ENCODE measurements at regions of chr11 and their contacts with region 1.

Region 1: DNA sequence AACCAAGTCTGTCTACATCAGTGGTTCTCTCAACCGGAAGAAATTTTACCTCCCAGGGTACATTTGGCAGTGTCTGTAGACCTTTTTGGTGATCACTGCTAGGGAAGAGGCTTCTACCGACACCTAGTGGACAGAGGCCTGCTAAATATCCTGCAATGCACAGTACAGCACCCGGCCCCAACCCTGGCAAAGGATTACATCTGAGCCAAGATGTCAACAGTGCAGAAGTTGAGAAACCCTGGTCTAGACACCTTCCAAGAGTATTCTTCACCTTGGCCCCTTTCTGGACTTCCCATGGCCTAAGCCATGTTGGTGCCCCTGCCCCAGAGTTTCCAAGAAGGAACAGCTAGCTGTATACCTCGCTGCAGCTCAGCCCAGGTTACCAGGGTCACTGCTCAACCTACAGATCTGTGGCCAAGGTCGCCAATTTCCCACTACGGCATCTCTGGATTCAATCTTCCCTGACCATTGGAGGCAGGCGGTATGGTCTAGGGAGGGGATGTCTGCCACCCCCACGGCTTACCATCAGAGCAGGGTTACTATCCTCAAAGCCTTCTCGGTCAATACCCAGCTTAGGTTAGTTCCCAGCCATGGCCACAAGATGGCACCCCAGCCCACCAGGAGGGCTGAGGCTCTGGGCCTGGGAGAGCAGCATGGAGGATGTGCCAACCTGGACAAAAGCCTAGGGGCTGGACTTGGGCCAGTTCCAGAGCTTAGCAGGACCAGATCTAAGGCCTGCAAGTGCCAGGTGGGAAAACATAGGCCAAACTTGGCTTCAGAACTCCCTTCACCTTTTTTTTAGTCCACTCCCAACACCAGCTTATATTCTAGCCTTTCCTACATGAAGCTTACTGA is 3.7 kb upstream of the KCNC1 start:
- DNase-seq: peak; percentile 66
- ATAC-seq: peak; percentile 77
- H3K4me3 ChIP-seq: no peak overlapping the region
- H3K27ac ChIP-seq: no peak overlapping the region
- H3K4me1 ChIP-seq: no peaks in the 10 kb centered on the region
- H3K27me3 ChIP-seq: peaks cover 32% of the 10 kb centered on the region
- CTCF ChIP-seq: peak; percentile 96
- POLR2A ChIP-seq: peak; percentile 46; the same call in 1 of the 2 replicates
- RAD21 ChIP-seq: peak; percentile 98

Region 2: GRCh38 chr11:16986434-16987215 is 744.2 kb before region 1 on chr11:
- CTCF ChIA-PET with region 1: no interaction called
- POLR2A ChIA-PET with region 1: no interaction called
- dilution Hi-C with region 1: no loop called
- in situ Hi-C with region 1: no loop called
- intact Hi-C with region 1: no loop called
- DNase-seq: no peak
- ATAC-seq: no peak
- H3K4me3 ChIP-seq: no peak overlapping the region
- H3K27ac ChIP-seq: no peak overlapping the region
- H3K4me1 ChIP-seq: no peaks in the 10 kb centered on the region
- H3K27me3 ChIP-seq: no peaks in the 10 kb centered on the region; the same call in none of the 2 replicates
- CTCF ChIP-seq: no peak
- POLR2A ChIP-seq: no peak
- RAD21 ChIP-seq: no peak

Region 3: DNA sequence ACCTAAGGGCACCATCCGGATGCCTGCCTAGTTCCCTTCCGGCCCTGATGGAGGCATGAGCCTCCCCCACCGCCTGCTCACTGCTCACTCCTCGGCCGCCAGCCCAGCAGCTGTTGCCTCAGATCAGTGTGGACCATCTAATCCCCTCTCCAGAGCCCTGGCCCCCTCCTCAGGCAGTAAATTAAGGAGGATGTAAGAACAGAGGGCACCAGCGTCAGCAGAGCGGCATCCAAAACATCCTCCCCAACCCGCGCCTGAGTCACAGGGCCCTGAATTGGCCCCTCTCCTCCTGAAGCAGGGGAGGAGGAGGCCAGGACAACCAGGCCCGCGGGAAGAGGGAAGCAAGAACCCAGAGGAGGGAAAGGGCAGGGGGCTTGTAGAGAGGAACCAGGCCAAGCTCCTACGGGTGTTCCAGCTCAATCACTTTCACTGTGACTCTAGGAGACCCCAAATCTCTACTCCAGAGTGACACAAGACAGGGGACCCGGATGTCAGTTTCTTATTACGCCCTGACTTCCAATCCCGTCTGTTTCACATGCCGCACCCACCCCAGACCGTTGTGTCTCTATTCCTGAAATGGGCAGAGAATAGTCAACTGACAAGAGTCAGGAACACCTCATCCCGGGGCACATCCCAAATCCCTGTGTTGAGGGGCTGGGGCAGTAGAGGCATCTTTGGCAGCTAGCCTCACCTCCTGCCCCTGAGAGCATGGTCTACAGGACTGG is 42.7 kb before region 1 on chr11:
- CTCF ChIA-PET with region 1: no interaction called
- POLR2A ChIA-PET with region 1: no interaction called
- dilution Hi-C with region 1: no loop called
- in situ Hi-C with region 1: no loop called
- intact Hi-C with region 1: no loop called
- DNase-seq: no peak
- ATAC-seq: no peak
- H3K4me3 ChIP-seq: no peak overlapping the region
- H3K27ac ChIP-seq: no peak overlapping the region
- H3K4me1 ChIP-seq: no peaks in the 10 kb centered on the region
- H3K27me3 ChIP-seq: peaks cover 13% of the 10 kb centered on the region; the same call in 1 of the 2 replicates
- CTCF ChIP-seq: no peak
- POLR2A ChIP-seq: no peak
- RAD21 ChIP-seq: no peak

Region 4: DNA sequence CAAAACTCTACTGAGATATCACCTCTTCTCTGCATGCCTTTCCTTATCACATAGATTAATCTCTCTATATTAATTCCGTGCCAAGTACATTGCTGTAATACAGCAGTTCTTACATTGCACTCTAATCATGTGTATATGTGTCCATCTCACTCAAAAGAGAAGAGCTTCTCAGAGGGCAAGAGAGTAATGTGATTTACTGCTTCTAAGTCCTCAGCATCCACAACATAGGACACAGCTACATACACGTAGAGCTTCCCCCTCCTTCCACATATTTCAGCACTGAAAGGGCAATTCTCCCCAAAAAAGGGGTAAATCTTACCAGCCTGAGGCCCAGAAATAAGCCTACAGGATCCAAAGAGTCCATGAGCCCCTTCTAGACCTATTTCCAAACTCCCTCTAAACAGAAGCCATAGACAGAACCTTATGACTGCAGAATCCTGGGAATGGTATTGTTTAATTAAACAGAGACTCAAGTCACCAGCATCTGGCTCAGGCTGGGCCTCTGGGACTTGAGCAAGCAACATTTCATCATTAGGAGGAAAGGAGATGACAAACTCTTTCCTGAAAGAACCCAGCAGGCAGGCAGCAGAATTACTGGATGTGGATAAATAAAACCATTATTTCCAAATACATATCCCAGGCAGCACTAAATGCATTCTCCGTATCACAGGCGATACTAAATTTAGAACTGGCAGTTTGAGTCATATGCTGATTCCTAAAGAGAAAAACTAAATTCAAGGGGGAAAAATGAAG is 91.0 kb after region 1 on chr11:
- CTCF ChIA-PET with region 1: interaction called, 4 read pairs
- POLR2A ChIA-PET with region 1: no interaction called
- dilution Hi-C with region 1: no loop called
- in situ Hi-C with region 1: no loop called
- intact Hi-C with region 1: loop called (anchors 5 kb)
- DNase-seq: peak; percentile 82
- ATAC-seq: peak; percentile 92
- H3K4me3 ChIP-seq: no peak overlapping the region
- H3K27ac ChIP-seq: peak overlapping the region; percentile 15; the same call in 1 of the 2 replicates
- H3K4me1 ChIP-seq: peaks cover 8% of the 10 kb centered on the region
- H3K27me3 ChIP-seq: no peaks in the 10 kb centered on the region
- CTCF ChIP-seq: no peak
- POLR2A ChIP-seq: no peak
- RAD21 ChIP-seq: no peak

Region 5: GRCh38 chr11:17972987-17973386 is 242.2 kb after region 1 on chr11:
- CTCF ChIA-PET with region 1: interaction called, 158 read pairs
- POLR2A ChIA-PET with region 1: no interaction called
- dilution Hi-C with region 1: loop called (anchors 25 kb)
- in situ Hi-C with region 1: loop called (anchors 5 kb)
- intact Hi-C with region 1: loop called (anchors 1 kb)
- DNase-seq: peak; percentile 93
- ATAC-seq: peak; percentile 99
- H3K4me3 ChIP-seq: no peak overlapping the region
- H3K27ac ChIP-seq: no peak overlapping the region
- H3K4me1 ChIP-seq: peaks cover 1% of the 10 kb centered on the region; the same call in 1 of the 2 replicates
- H3K27me3 ChIP-seq: no peaks in the 10 kb centered on the region
- CTCF ChIP-seq: peak; percentile 82
- POLR2A ChIP-seq: no peak
- RAD21 ChIP-seq: peak; percentile 90

Region 6: DNA sequence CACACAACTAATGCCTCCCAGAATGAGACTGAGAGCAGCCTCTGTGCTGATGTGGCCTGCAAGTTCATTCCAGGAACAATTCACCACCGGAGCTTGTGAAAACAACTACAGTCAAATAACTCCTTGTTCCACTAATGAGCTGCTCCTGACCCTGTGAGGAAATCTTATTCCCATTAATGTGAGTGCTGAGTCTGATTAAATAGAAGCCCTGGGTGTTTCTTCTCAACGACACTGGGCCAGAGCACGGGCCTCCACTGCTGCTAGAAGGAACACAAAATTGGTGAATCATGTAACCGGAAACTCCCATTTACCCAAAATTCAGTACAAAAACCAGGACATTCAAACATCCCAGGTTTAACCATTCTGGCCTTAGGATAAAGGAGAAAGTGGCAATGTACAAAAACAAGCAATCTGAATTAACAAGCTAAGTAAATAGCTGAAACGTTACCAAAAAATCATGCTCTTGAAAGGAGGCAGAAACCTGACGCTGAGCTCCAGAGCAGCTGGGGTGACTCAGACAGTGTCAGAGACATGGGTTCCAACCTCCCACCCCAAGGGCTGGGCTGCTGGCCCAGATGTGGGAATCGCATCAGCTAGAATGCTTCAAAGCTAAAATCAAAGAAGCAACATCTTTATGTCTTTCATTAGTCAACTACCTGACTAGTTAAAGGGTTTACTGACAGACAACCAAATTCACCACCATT is 255.3 kb after region 1 on chr11:
- CTCF ChIA-PET with region 1: interaction called, 158 read pairs
- POLR2A ChIA-PET with region 1: no interaction called
- dilution Hi-C with region 1: loop called (anchors 25 kb)
- in situ Hi-C with region 1: no loop called
- intact Hi-C with region 1: no loop called
- DNase-seq: peak; percentile 90
- ATAC-seq: peak; percentile 99
- H3K4me3 ChIP-seq: no peak overlapping the region
- H3K27ac ChIP-seq: no peak overlapping the region
- H3K4me1 ChIP-seq: peaks cover 7% of the 10 kb centered on the region; the same call in 1 of the 2 replicates
- H3K27me3 ChIP-seq: no peaks in the 10 kb centered on the region
- CTCF ChIP-seq: no peak
- POLR2A ChIP-seq: no peak
- RAD21 ChIP-seq: no peak

Region 7: GRCh38 chr11:18105802-18106574 is 375.2 kb after region 1 on chr11 and contains the start of gene SAAL1:
- CTCF ChIA-PET with region 1: no interaction called
- POLR2A ChIA-PET with region 1: no interaction called
- dilution Hi-C with region 1: no loop called
- in situ Hi-C with region 1: no loop called
- intact Hi-C with region 1: loop called (anchors 10 kb)
- DNase-seq: peak; percentile 67
- ATAC-seq: peak; percentile 99
- H3K4me3 ChIP-seq: peak within 1 kb of the TSS; percentile 88
- H3K27ac ChIP-seq: peak within 1 kb of the TSS; percentile 58; the same call in 1 of the 2 replicates
- H3K4me1 ChIP-seq: peaks cover 4% of the 10 kb centered on the region; the same call in 1 of the 2 replicates
- H3K27me3 ChIP-seq: peaks cover 1% of the 10 kb centered on the region; the same call in 1 of the 2 replicates
- CTCF ChIP-seq: peak; percentile 59
- POLR2A ChIP-seq: 0 out of 2 replicates have a peak, but pooled peaks have one; percentile 18
- RAD21 ChIP-seq: peak; percentile 33
- total RNA-seq, gene SAAL1: 12.5 and 21.1 TPM in 2 replicates